MCF 10A (cell line): ENCODE measurements at regions of chr1 and their contacts with region 1.

Region 1: GRCh38 chr1:9121496-9122409 is 7.1 kb downstream of the GPR157 start:
- DNase-seq: no peak
- H3K4me3 Mint-ChIP-seq: no peak overlapping the region
- H3K27ac Mint-ChIP-seq: no peak overlapping the region
- H3K4me1 Mint-ChIP-seq: no peaks in the 10 kb centered on the region
- H3K27me3 Mint-ChIP-seq: no peaks in the 10 kb centered on the region
- CTCF ChIP-seq: no peak

Region 2: GRCh38 chr1:8817406-8818324 is 304.1 kb before region 1 on chr1 and contains the start of gene RERE:
- CTCF ChIA-PET with region 1: no interaction called
- POLR2A ChIA-PET with region 1: no interaction called
- intact Hi-C with region 1: no loop called
- DNase-seq: peak; percentile 93
- H3K4me3 Mint-ChIP-seq: peak within 1 kb of the TSS; percentile 84
- H3K27ac Mint-ChIP-seq: peak within 1 kb of the TSS; percentile 97
- H3K4me1 Mint-ChIP-seq: peaks cover 44% of the 10 kb centered on the region
- H3K27me3 Mint-ChIP-seq: no peaks in the 10 kb centered on the region
- CTCF ChIP-seq: no peak
- total RNA-seq, gene RERE: 36.8 and 48.4 TPM in 2 replicates

Region 3: GRCh38 chr1:9110669-9111356 is 10.9 kb before region 1 on chr1:
- CTCF ChIA-PET with region 1: interaction called, 17 read pairs
- POLR2A ChIA-PET with region 1: interaction called, 29 read pairs
- intact Hi-C with region 1: no loop called
- DNase-seq: peak; percentile 99
- H3K4me3 Mint-ChIP-seq: no peak overlapping the region
- H3K27ac Mint-ChIP-seq: no peak overlapping the region
- H3K4me1 Mint-ChIP-seq: peaks cover 41% of the 10 kb centered on the region
- H3K27me3 Mint-ChIP-seq: no peaks in the 10 kb centered on the region
- CTCF ChIP-seq: peak; percentile 92